A673 (cell line): ENCODE measurements at regions of chr6 and their contacts with region 1.

Region 1: GRCh38 chr6:144411332-144412190 is 126.4 kb downstream of the UTRN start:
- DNase-seq: no peak
- H3K4me3 ChIP-seq: no peak overlapping the region
- H3K27ac ChIP-seq: no peak overlapping the region
- H3K4me1 ChIP-seq: peaks cover 3% of the 10 kb centered on the region
- H3K27me3 ChIP-seq: no peaks in the 10 kb centered on the region
- CTCF ChIP-seq: no peak

Region 2: DNA sequence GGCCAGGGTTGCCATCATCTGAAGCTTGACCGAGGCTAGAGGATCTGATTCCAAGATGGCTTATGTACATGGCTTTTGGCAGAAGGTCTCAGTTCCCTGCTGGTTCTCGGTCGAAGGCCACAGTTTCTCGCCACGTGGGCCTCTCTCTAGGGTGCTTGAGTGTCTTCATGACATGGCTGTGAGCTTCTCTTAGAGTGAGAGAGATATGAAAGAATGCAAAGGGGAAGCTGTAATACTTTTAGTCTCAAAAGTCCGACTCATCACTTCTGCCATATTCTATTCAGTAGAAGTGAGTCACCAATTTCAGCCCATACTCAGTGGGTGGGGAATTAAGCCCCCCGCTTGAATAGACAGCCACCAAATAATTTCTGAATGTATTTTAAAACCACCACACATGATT is 32.2 kb before region 1 on chr6:
- CTCF ChIA-PET with region 1: no interaction called
- POLR2A ChIA-PET with region 1: interaction called, 11 read pairs
- intact Hi-C with region 1: no loop called
- DNase-seq: peak; percentile 66
- H3K4me3 ChIP-seq: no peak overlapping the region
- H3K27ac ChIP-seq: no peak overlapping the region
- H3K4me1 ChIP-seq: peaks cover 2% of the 10 kb centered on the region
- H3K27me3 ChIP-seq: no peaks in the 10 kb centered on the region
- CTCF ChIP-seq: no peak

Region 3: GRCh38 chr6:145044641-145045246 is 633.2 kb after region 1 on chr6:
- CTCF ChIA-PET with region 1: no interaction called
- POLR2A ChIA-PET with region 1: no interaction called
- intact Hi-C with region 1: no loop called
- DNase-seq: no peak
- H3K4me3 ChIP-seq: no peak overlapping the region
- H3K27ac ChIP-seq: no peak overlapping the region
- H3K4me1 ChIP-seq: no peaks in the 10 kb centered on the region
- H3K27me3 ChIP-seq: no peaks in the 10 kb centered on the region
- CTCF ChIP-seq: no peak